CD8-positive, alpha-beta memory T cell (primary cell): ENCODE measurements at regions of chr3 and their contacts with region 1.

Region 1: DNA sequence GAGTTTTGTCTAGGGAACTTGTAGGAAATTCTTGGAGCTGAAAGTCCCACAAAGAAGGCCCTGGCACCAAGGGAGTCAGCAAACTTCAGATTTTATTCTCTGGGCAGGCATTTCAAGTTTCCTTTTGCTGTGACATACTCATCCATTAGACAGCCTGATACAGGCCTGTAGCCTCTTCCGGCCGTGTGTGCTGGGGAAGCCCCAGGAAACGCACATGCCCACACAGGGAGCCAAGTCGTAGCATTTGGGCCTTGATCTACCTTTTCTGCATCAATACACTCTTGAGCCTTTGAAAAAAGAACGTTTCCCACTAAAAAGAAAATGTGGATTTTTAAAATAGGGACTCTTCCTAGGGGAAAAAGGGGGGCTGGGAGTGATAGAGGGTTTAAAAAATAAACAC is 15.0 kb downstream of the TIGIT start:
- DNase-seq: peak; percentile 36 to 85 (median 54)
- H3K4me3 ChIP-seq: peak overlapping the region; percentile 27
- H3K4me3 Mint-ChIP-seq: peak overlapping the region; percentile 57 to 84 (median 73)
- H3K27ac ChIP-seq: peak overlapping the region; percentile 64
- H3K27ac Mint-ChIP-seq: peak overlapping the region; percentile 86 to 99 (median 96)
- H3K4me1 ChIP-seq: peaks cover 67% of the 10 kb centered on the region
- H3K4me1 Mint-ChIP-seq: peaks cover 73 to 93% (median 91%) of the 10 kb centered on the region in 3 donors
- H3K27me3 ChIP-seq: no peaks in the 10 kb centered on the region
- H3K27me3 Mint-ChIP-seq: peaks cover 0 to 3% of the 10 kb centered on the region in 2 donors

Region 2: DNA sequence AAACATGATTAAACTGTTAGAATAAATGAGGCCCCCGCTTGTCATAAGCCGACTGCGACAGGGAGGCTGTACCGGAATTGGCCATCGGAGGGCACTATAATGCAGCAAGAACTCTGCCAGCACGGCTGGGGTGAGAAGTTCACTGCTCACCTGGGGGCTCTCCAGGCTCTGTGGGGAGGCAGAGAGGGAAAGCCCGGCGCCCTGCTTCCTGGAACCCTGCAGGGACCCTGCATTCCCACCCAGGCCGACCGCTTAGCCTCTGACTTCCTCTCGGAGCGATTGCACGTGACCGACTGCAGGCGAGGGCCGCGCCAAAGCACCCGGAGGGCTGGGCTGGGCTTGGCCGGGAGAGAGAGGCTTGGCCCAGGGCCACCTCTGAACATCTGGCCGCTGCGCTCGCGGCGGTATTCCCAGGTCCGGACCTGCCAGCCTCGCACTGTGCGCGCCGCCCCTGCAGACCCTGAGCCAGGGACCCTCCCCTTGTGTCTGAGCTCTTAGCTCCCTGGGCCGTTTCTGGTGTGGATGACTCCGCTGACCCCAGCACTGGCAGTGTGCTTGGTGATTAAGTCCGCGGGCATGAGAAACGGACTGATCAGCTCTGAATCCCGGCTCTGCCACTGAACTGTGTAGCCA is 156.2 kb before region 1 on chr3:
- CTCF ChIA-PET with region 1: interaction called, 10 read pairs
- POLR2A ChIA-PET with region 1: interaction called, 3 read pairs
- DNase-seq: peak; percentile 74 to 89 (median 76)
- H3K4me3 ChIP-seq: peak overlapping the region; percentile 44
- H3K4me3 Mint-ChIP-seq: peak overlapping the region; percentile 56 to 89 (median 68)
- H3K27ac ChIP-seq: no peak overlapping the region
- H3K27ac Mint-ChIP-seq: peak overlapping the region in 6 of 8 donors; percentile 35 to 77 (median 46)
- H3K4me1 ChIP-seq: peaks cover 7% of the 10 kb centered on the region
- H3K4me1 Mint-ChIP-seq: peaks cover 10 to 19% (median 15%) of the 10 kb centered on the region in 3 donors
- H3K27me3 ChIP-seq: no peaks in the 10 kb centered on the region
- H3K27me3 Mint-ChIP-seq: no peaks in the 10 kb centered on the region

Region 3: DNA sequence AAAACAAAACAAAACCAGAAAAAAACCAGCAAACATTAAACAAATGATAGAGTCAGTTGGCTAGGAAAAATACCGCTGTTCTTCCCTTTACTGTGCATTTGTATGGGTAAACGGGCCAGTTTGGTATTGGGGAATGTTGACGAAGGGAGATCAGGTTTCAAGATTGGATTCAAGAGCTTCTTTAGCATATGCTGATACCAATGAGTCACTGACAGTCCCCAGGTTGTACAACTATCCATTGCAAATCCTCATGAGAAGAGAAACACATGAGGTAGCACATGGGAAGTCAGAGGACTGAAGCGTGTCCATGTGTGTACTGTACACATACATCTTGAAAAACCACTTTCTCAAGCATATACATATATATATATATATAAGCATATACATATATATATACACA is 10.6 kb after region 1 on chr3:
- CTCF ChIA-PET with region 1: interaction called, 11 read pairs
- POLR2A ChIA-PET with region 1: interaction called, 12 read pairs
- DNase-seq: no peak
- H3K4me3 ChIP-seq: no peak overlapping the region
- H3K4me3 Mint-ChIP-seq: peak overlapping the region in 1 of 7 donors; percentile 53
- H3K27ac ChIP-seq: no peak overlapping the region
- H3K27ac Mint-ChIP-seq: peak overlapping the region in 6 of 8 donors; percentile 3 to 73 (median 42)
- H3K4me1 ChIP-seq: peaks cover 31% of the 10 kb centered on the region
- H3K4me1 Mint-ChIP-seq: peaks cover 79 to 98% (median 91%) of the 10 kb centered on the region in 3 donors
- H3K27me3 ChIP-seq: no peaks in the 10 kb centered on the region
- H3K27me3 Mint-ChIP-seq: peaks cover 0 to 2% of the 10 kb centered on the region in 2 donors

Region 4: GRCh38 chr3:114624571-114625181 is 315.8 kb after region 1 on chr3:
- CTCF ChIA-PET with region 1: no interaction called
- POLR2A ChIA-PET with region 1: no interaction called
- DNase-seq: no peak
- H3K4me3 ChIP-seq: no peak overlapping the region
- H3K4me3 Mint-ChIP-seq: no peak overlapping the region
- H3K27ac ChIP-seq: no peak overlapping the region
- H3K27ac Mint-ChIP-seq: no peak overlapping the region
- H3K4me1 ChIP-seq: no peaks in the 10 kb centered on the region
- H3K4me1 Mint-ChIP-seq: peaks cover 0 to 8% (median 0%) of the 10 kb centered on the region in 3 donors
- H3K27me3 ChIP-seq: no peaks in the 10 kb centered on the region
- H3K27me3 Mint-ChIP-seq: peaks cover 0 to 2% of the 10 kb centered on the region in 2 donors